Activated CD4-positive, alpha-beta T cell treated with anti-CD3 and anti-CD28 coated beads for 36 hours (primary cell): ENCODE measurements at regions of chr4 and their contacts with region 1.

Region 1: GRCh38 chr4:82739316-82740179 is 59.0 kb downstream of the SCD5 start:
- DNase-seq: peak; percentile 92
- ATAC-seq: peak; percentile 100
- H3K4me3 Mint-ChIP-seq: no peak overlapping the region
- H3K27ac Mint-ChIP-seq: no peak overlapping the region
- H3K4me1 Mint-ChIP-seq: no peaks in the 10 kb centered on the region
- H3K27me3 Mint-ChIP-seq: peaks cover 4% of the 10 kb centered on the region

Region 2: GRCh38 chr4:82462415-82462831 is 277.1 kb before region 1 on chr4:
- CTCF ChIA-PET with region 1: interaction called, 43 read pairs
- POLR2A ChIA-PET with region 1: no interaction called
- intact Hi-C with region 1: loop called (anchors 1 kb)
- DNase-seq: peak; percentile 93
- ATAC-seq: peak; percentile 95
- H3K4me3 Mint-ChIP-seq: no peak overlapping the region
- H3K27ac Mint-ChIP-seq: no peak overlapping the region
- H3K4me1 Mint-ChIP-seq: peaks cover 9% of the 10 kb centered on the region
- H3K27me3 Mint-ChIP-seq: no peaks in the 10 kb centered on the region

Region 3: GRCh38 chr4:82469791-82470345 is 269.7 kb before region 1 on chr4:
- CTCF ChIA-PET with region 1: interaction called, 14 read pairs
- POLR2A ChIA-PET with region 1: no interaction called
- intact Hi-C with region 1: no loop called
- DNase-seq: no peak
- ATAC-seq: peak; percentile 63
- H3K4me3 Mint-ChIP-seq: no peak overlapping the region
- H3K27ac Mint-ChIP-seq: no peak overlapping the region
- H3K4me1 Mint-ChIP-seq: no peaks in the 10 kb centered on the region
- H3K27me3 Mint-ChIP-seq: no peaks in the 10 kb centered on the region

Region 4: GRCh38 chr4:82677321-82677720 is 62.2 kb before region 1 on chr4:
- CTCF ChIA-PET with region 1: interaction called, 10 read pairs
- POLR2A ChIA-PET with region 1: no interaction called
- intact Hi-C with region 1: no loop called
- DNase-seq: no peak
- ATAC-seq: no peak
- H3K4me3 Mint-ChIP-seq: no peak overlapping the region
- H3K27ac Mint-ChIP-seq: no peak overlapping the region
- H3K4me1 Mint-ChIP-seq: no peaks in the 10 kb centered on the region
- H3K27me3 Mint-ChIP-seq: peaks cover 3% of the 10 kb centered on the region

Region 5: GRCh38 chr4:82721819-82722423 is 17.6 kb before region 1 on chr4:
- CTCF ChIA-PET with region 1: interaction called, 17 read pairs
- POLR2A ChIA-PET with region 1: no interaction called
- intact Hi-C with region 1: no loop called
- DNase-seq: peak; percentile 51
- ATAC-seq: peak; percentile 74
- H3K4me3 Mint-ChIP-seq: no peak overlapping the region
- H3K27ac Mint-ChIP-seq: no peak overlapping the region
- H3K4me1 Mint-ChIP-seq: no peaks in the 10 kb centered on the region
- H3K27me3 Mint-ChIP-seq: no peaks in the 10 kb centered on the region